A673 (cell line): ENCODE measurements at regions of chr5 and their contacts with region 1.

Region 1: GRCh38 chr5:133681896-133682295 is 69.6 kb upstream of the FSTL4 start:
- DNase-seq: no peak
- H3K4me3 ChIP-seq: no peak overlapping the region
- H3K27ac ChIP-seq: no peak overlapping the region
- H3K4me1 ChIP-seq: no peaks in the 10 kb centered on the region
- H3K27me3 ChIP-seq: no peaks in the 10 kb centered on the region
- CTCF ChIP-seq: no peak

Region 2: DNA sequence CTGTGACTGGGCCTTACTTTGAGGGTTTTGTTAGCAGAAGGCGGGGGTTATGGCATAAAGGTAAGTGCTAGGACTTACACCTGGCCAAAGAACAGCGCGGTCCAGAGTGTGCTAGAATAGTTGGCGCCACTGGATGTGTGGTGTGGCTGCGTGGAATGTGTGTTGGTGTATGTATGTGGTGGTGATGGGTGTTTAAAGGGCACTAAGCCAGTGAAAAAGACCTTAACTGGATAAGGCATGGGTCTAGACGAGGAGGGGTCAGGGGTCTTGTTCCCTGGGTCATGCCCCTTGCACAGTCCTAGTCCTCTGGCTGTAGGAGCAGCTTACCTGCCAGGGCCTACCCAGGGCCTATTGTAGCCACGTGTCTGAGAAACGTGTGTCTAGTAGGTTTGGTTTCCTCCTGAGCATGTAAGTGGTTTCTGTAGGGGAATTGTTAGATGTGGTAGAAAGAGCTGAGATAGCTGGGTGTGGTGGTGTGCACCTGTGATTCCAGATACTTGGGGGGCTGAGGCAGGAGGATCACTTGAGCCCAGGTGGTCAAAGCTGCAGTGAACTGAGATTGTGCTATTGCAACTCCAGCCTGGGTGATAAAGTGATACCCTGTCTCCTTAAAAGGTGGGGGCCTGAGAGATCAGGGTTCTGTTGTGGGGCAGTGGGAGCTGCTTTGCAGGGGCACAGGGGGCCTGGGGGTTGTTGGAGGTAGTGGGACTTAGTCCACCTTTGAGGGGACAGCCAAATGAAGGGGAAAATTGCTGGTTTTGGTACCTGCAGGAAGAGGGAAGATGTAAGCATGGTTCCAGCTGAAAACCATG is 574.9 kb before region 1 on chr5:
- CTCF ChIA-PET with region 1: no interaction called
- POLR2A ChIA-PET with region 1: no interaction called
- intact Hi-C with region 1: no loop called
- DNase-seq: no peak
- H3K4me3 ChIP-seq: no peak overlapping the region
- H3K27ac ChIP-seq: no peak overlapping the region
- H3K4me1 ChIP-seq: no peaks in the 10 kb centered on the region
- H3K27me3 ChIP-seq: no peaks in the 10 kb centered on the region
- CTCF ChIP-seq: no peak

Region 3: GRCh38 chr5:133220851-133221674 is 460.8 kb before region 1 on chr5:
- CTCF ChIA-PET with region 1: no interaction called
- POLR2A ChIA-PET with region 1: interaction called, 15 read pairs
- intact Hi-C with region 1: no loop called
- DNase-seq: no peak
- H3K4me3 ChIP-seq: no peak overlapping the region
- H3K27ac ChIP-seq: no peak overlapping the region
- H3K4me1 ChIP-seq: no peaks in the 10 kb centered on the region
- H3K27me3 ChIP-seq: no peaks in the 10 kb centered on the region
- CTCF ChIP-seq: no peak

Region 4: DNA sequence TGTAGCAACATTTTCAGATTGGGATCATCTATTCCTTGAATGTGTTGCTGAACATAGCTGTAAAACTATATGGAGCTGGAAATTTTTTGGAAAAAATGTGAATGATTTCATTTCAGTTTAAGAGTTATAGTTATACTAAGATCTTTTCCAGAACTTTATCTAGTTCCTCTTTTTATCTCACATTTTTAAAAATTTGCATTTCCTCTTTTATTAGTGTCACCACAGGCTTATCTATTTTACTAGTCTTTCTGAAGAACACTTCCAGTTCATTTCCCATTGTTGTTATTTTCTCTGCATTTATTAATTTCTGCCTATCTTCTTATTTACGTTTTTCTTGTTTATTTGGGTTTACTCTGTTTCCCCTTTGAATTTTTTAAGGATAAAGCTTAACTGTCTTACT is 23.6 kb before region 1 on chr5:
- CTCF ChIA-PET with region 1: no interaction called
- POLR2A ChIA-PET with region 1: no interaction called
- intact Hi-C with region 1: no loop called
- DNase-seq: no peak
- H3K4me3 ChIP-seq: no peak overlapping the region
- H3K27ac ChIP-seq: no peak overlapping the region
- H3K4me1 ChIP-seq: peaks cover 1% of the 10 kb centered on the region
- H3K27me3 ChIP-seq: peaks cover 3% of the 10 kb centered on the region
- CTCF ChIP-seq: no peak